ENCODE measurements at regions of chr11 and their contacts with region 1.

Region 1: DNA sequence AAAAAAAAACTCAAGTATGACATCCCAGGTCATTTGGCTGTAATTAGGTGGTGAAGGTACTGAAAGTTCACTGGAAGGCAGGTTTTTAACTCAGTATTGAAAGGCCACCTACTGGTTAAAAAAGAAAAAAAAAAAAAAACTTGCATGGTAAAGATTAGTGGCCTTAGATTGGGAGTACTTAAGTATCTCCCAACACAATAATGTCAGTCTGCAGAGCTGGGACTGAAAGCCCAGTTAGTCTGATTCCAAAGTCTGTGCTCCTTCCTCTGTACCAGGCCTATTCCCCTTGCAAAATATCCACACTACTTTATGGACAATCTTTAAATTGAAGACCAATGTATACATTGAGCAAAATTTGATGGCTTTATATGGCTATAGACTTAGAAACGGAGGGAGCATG is 85.5 kb downstream of the NOX4 start:
- DNase-seq: peak; percentile 59
- H3K4me3 ChIP-seq: no peak overlapping the region
- H3K27ac ChIP-seq: no peak overlapping the region
- H3K4me1 ChIP-seq: no peaks in the 10 kb centered on the region
- H3K27me3 ChIP-seq: no peaks in the 10 kb centered on the region
- CTCF ChIP-seq: peak in 1 of 2 donors; percentile 3
- POLR2A ChIP-seq: no peak

Region 2: GRCh38 chr11:89327885-89328284 is 77.7 kb before region 1 on chr11:
- CTCF ChIA-PET with region 1: interaction called, 6 read pairs
- POLR2A ChIA-PET with region 1: no interaction called
- dilution Hi-C with region 1: no loop called
- intact Hi-C with region 1: loop called (anchors 1 kb)
- DNase-seq: no peak
- H3K4me3 ChIP-seq: no peak overlapping the region
- H3K27ac ChIP-seq: no peak overlapping the region
- H3K4me1 ChIP-seq: no peaks in the 10 kb centered on the region
- H3K27me3 ChIP-seq: no peaks in the 10 kb centered on the region
- CTCF ChIP-seq: no peak
- POLR2A ChIP-seq: no peak

Region 3: DNA sequence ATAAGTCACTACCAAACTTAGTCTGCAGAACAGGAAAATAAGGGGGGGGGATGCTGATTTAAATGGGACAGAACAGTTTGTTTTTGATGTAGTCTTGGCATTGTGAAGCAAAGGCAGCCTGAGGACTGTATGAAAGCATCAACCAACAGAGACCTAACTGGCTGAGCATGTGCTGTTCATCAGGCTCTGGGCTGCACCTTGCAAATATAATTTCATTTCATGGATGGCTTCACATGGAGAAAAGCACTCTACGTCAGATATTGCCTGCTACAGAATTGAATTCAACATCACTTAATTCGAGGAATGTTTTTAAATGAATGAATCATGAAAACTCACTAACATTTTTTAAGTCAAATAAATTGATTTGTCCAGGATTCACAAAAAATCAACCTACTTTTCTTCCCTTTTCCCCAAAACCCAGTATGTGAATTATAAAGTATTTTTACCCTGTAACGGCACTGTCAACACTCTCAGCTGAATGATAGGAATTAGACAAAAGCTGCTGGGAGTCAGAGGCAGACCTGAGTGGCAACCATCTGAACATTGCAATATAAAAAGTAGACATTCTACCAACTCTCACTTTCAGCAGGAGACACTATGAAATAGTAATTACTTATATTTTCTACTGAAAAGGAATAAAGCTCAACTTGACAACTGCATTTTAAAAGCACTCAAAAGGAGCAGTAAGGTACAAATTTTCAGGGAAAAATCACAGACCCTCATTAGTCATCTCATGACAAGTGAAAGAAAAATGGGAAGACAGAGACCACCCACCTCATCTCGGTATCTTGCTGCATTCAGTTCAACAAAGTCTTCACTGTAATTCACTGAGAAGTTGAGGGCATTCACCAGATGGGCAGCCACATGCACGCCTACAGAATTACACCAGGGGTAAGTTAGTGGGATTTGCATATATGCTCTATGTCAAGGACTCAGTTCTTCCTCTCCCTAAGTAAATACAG is 38.0 kb after region 1 on chr11:
- CTCF ChIA-PET with region 1: no interaction called
- POLR2A ChIA-PET with region 1: no interaction called
- dilution Hi-C with region 1: no loop called
- intact Hi-C with region 1: no loop called
- DNase-seq: peak; percentile 18
- H3K4me3 ChIP-seq: no peak overlapping the region
- H3K27ac ChIP-seq: no peak overlapping the region
- H3K4me1 ChIP-seq: peaks cover 8% of the 10 kb centered on the region
- H3K27me3 ChIP-seq: no peaks in the 10 kb centered on the region
- CTCF ChIP-seq: no peak
- POLR2A ChIP-seq: no peak

Region 4: DNA sequence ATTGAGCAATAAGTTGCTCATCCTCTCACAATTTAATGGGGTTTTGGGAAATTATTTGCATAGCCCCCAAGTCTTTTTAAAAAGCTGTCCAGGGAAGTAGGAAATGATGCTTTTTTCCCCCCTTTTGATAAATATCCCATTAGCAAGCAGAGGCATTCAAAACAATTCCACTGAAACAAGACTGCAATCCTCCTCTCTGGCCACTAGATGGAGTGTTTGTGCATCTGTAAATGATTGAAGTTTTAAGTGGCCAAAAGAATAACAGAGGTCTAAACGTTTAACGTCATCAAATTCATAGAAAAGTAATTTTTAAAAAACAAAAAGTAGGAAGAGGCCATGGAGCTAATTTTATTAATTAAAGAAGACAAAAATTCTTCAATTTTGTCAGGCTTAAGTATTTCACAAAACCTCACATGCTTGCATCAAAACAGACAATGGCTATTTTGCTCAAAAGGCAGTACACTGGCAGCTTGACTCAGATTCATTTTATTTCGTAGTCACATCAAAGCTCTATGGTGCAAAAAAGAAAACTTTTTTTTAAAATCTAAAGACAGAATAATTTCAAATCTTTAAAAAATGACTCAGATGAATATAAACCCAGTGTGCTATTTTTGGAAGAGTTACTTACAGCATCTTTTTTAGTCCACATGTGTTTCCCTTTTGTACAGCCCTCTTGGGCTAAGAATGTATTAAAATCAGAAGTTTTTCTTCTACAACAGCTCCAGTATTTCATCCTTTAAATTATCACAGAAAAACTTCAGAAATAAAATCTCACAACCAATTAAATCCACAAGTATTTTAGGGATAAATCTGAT is 799.4 kb after region 1 on chr11:
- CTCF ChIA-PET with region 1: no interaction called
- POLR2A ChIA-PET with region 1: no interaction called
- dilution Hi-C with region 1: no loop called
- intact Hi-C with region 1: no loop called
- DNase-seq: peak; percentile 68
- H3K4me3 ChIP-seq: no peak overlapping the region
- H3K27ac ChIP-seq: no peak overlapping the region
- H3K4me1 ChIP-seq: no peaks in the 10 kb centered on the region
- H3K27me3 ChIP-seq: no peaks in the 10 kb centered on the region
- CTCF ChIP-seq: peak; percentile 59 to 71
- POLR2A ChIP-seq: no peak